ENCODE measurements at regions of chr12 and their contacts with region 1.

Region 1: DNA sequence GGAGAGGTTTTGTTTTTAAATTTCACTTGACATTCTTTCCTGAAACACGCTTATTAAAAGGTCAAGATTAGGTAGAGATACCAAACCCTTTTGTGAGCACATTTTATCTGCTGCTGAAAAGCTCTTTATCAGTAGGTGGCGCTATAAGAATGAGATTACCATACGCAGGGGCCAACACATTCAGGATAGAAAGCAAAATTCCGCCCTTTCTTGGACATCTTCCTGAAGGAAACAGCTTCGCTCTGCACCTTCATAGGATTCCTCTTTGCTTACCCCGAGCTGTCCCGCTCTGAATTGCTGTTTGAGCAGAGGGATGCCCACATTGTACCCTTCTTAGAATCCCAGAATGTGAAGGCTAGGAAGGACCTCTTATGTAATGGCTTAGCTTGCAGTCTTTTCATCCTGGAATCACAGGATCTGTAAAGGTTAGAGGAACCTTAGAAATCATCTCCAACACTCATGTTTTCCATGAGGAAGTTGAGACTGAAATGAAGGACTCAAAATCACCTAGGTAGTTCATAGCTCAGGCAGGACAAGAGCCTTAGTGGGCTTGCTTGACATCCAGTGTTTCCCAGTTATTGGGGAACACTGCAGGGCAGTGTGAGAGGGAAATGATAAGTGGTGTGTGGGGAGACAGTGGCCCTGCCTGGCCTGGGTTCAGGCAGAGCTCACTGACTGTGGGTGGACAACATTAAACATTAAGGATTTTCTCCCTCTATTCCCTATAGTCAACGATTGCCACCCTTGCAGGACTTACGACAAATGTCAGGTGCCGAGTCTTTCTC is 38.7 kb upstream of the CRY1 start:
- DNase-seq: no peak
- ATAC-seq: peak in 1 of 2 donors; percentile 47

Region 2: DNA sequence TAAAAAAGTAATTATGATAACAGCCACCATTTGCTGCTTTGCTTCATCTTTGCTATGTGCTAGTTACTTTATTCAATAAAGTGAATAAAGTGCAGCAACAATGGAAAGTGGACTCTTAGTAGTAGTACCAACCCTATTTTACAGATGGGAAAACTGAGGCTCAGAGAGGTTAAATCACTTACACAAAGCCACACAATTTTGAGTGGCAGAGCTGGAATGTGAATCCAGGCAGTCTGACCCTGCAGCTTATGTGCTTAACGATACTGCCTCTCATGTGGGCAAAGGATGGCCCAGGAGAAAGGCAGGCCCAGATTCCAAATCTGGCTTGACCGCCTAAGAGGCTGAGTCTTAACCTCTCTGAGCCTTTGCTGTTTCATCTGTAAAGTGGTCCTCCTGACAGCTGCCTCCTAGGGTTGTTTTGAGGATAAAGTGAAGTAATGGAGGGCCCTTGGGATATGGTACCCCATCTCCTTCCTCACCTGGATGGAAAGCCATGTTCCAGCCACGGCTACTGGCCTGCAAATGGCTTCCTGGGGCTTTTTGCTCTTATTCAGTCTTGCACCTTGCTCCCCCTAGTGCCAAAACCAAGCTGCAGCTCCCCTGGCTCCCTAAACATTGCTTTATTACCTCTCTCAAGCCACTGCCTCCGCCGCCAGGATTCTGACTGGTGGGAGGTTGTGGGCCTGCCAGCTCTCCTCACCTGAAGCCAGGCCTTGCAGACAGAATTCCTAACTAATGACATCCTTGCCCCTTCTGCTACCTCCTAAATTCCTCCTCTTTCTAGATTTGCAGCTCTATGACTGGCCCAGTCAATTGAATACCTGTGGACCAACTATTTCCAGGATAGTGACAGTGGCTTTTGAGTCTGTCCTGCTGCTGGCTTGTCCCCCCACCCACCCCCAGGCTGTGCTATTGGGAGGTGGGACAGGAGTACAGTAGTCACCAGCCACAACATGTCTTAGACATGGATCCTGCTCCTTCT is 270.3 kb after region 1 on chr12:
- intact Hi-C with region 1: loop called in 1 of 2 experiments (anchors 10 kb)
- DNase-seq: peak; percentile 27
- ATAC-seq: peak in 1 of 2 donors; percentile 50

Region 3: GRCh38 chr12:107607464-107608392 is 475.7 kb after region 1 on chr12:
- intact Hi-C with region 1: loop called (anchors 1 to 2 kb)
- DNase-seq: peak; percentile 81
- ATAC-seq: peak; percentile 78 to 87